ENCODE measurements at regions of chr6 and their contacts with region 1.

Region 1: GRCh38 chr6:18323935-18324705 is 59.8 kb upstream of the DEK start:
- DNase-seq: peak in 1 of 6 donors; percentile 13
- ATAC-seq: peak; percentile 74 to 93 (median 88)
- H3K4me3 ChIP-seq: no peak overlapping the region
- H3K27ac ChIP-seq: no peak overlapping the region
- H3K4me1 ChIP-seq: peaks cover 0 to 5% (median 0%) of the 10 kb centered on the region in 3 donors
- H3K27me3 ChIP-seq: no peaks in the 10 kb centered on the region
- CTCF ChIP-seq: peak; percentile 47 to 61 (median 48)

Region 2: DNA sequence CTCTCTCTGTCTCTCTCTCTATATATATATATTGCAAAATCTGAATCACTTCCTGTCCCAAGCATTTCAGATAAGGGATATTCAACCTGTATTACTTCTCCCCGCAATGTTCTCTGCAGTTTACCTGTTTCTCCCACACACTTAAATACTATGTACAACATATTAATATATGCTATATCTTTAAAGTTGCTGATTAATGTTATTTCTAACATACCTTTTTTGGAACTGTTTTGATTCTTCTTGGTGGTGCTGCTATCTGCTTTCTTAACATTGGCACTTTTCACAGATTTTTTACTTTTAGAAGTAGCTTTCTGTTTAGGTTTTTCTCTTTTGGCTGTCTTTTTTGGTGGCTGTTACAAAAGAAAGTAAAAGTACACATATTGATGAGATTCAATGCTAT is 87.0 kb before region 1 on chr6:
- intact Hi-C with region 1: no loop called
- DNase-seq: no peak
- ATAC-seq: no peak
- H3K4me3 ChIP-seq: no peak overlapping the region
- H3K27ac ChIP-seq: no peak overlapping the region
- H3K4me1 ChIP-seq: no peaks in the 10 kb centered on the region
- H3K27me3 ChIP-seq: no peaks in the 10 kb centered on the region
- CTCF ChIP-seq: no peak

Region 3: GRCh38 chr6:18400831-18401446 is 76.8 kb after region 1 on chr6:
- intact Hi-C with region 1: no loop called
- DNase-seq: no peak
- ATAC-seq: peak in 3 of 4 donors; percentile 48 to 72 (median 57)
- H3K4me3 ChIP-seq: no peak overlapping the region
- H3K27ac ChIP-seq: peak overlapping the region in 1 of 4 donors; percentile 45
- H3K4me1 ChIP-seq: peaks cover 0 to 23% (median 5%) of the 10 kb centered on the region in 3 donors
- H3K27me3 ChIP-seq: no peaks in the 10 kb centered on the region
- CTCF ChIP-seq: no peak

Region 4: GRCh38 chr6:18415671-18416340 is 91.7 kb after region 1 on chr6:
- intact Hi-C with region 1: no loop called
- DNase-seq: no peak
- ATAC-seq: no peak
- H3K4me3 ChIP-seq: no peak overlapping the region
- H3K27ac ChIP-seq: no peak overlapping the region
- H3K4me1 ChIP-seq: no peaks in the 10 kb centered on the region
- H3K27me3 ChIP-seq: no peaks in the 10 kb centered on the region
- CTCF ChIP-seq: no peak

Region 5: DNA sequence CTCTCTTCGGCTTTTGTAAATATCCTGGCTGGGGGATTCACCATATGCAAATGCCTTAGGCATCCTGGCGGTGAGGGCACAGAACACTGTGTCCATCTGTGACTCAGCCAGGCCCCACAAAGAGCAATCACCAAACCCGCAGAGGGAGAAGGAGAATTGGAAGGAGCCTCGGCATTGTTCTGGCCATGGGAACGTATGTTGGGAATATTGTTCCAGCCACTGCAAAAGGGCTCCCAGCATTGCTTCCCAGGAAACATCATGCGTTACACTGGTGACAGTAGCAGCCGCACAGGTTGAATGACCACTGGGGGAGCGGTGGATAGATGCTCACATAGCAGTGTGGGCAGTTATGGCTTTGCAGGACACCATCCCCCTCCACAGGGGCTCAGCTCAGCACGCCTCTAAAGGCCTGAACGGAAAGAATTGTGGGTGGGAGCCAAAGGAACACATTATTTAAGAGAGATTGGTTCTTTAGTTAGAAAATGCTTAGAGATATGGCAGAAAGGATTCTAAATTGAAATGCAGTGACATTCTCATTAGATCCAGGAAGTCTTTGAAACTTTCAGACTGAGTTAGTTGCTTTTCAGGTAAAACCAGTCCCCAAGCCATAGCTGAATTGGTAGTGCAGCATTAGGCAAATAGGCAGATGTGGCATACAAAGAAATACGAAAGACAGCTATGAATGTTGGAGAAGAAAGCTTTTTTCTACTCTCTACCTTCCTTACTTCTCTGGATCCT is 167.4 kb after region 1 on chr6:
- intact Hi-C with region 1: loop called in 1 of 3 experiments (anchors 10 kb)
- DNase-seq: no peak
- ATAC-seq: no peak
- H3K4me3 ChIP-seq: no peak overlapping the region
- H3K27ac ChIP-seq: peak overlapping the region in 1 of 4 donors; percentile 60
- H3K4me1 ChIP-seq: peaks cover 0 to 13% (median 0%) of the 10 kb centered on the region in 3 donors
- H3K27me3 ChIP-seq: peaks cover 0 to under 1% (median 0%) of the 10 kb centered on the region in 4 donors
- CTCF ChIP-seq: no peak

Region 6: DNA sequence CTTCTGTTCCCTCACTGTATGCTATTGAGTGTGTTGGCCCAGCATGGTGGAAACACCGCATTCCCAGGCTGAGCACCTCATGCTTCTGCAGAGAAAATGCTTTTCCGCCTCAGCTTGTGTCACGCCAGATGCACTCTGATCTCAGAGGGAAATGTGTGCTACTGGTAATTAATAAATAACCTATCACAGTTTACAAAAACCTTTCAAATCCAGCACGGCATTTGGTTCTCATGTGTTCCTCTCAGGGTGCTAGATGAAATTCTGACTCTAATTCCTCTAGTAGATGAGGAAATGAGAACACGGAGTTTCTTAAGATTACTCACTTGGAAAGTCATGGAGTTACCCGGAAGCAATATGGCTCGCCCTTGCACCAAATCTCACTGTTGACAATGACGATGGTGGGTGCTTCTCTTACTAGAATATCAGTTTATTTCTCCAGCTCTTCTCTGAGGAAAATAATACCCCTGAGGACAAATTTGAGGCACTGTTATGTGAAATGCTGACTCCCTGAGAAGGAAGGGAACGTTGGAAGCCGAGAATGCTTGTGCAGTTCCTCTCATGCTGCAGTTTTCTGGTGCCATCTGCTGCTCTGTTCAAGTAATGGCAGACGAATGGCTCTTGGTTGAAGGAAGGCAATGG is 179.6 kb after region 1 on chr6:
- intact Hi-C with region 1: loop called (anchors 5 to 10 kb)
- DNase-seq: peak in 3 of 6 donors; percentile 43 to 71 (median 60)
- ATAC-seq: peak; percentile 92 to 96 (median 94)
- H3K4me3 ChIP-seq: peak overlapping the region in 2 of 4 donors; percentile 29 to 33
- H3K27ac ChIP-seq: peak overlapping the region; percentile 23 to 75 (median 50)
- H3K4me1 ChIP-seq: peaks cover 0 to 4% (median 0%) of the 10 kb centered on the region in 3 donors
- H3K27me3 ChIP-seq: no peaks in the 10 kb centered on the region
- CTCF ChIP-seq: peak in 3 of 4 donors; percentile 60 to 74 (median 68)

Region 7: DNA sequence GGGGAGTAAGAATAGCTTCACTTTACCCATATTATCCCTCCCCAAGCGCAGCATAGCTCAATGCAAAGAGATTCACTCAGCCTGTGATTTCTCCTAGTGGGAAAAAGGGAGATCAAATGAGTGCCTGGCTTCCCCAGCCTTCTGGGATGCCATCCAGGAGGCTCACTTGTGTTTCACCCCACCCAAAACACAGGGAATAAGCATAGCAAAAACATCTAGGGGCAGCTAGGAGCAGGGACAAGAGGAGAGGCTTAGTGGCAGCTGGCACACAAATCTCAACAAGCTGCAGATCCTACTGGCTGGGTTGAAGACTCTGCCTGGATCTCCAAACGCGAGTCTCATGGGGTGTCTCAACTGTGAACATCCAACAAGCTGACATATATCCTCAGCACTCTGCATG is 778.8 kb after region 1 on chr6:
- intact Hi-C with region 1: no loop called
- DNase-seq: no peak
- ATAC-seq: no peak
- H3K4me3 ChIP-seq: no peak overlapping the region
- H3K27ac ChIP-seq: no peak overlapping the region
- H3K4me1 ChIP-seq: no peaks in the 10 kb centered on the region
- H3K27me3 ChIP-seq: no peaks in the 10 kb centered on the region
- CTCF ChIP-seq: no peak

Measured in pancreas (tissue), 10 donors.